ENCODE measurements at regions of chr19 and their contacts with region 1.

Region 1: GRCh38 chr19:53333463-53334449 is at the start of gene ZNF845:
- DNase-seq: peak; percentile 98
- total RNA-seq, gene ZNF845: 3.2 TPM

Region 2: GRCh38 chr19:53224606-53225005 is 109.2 kb before region 1 on chr19:
- intact Hi-C with region 1: no loop called
- DNase-seq: no peak

Region 3: DNA sequence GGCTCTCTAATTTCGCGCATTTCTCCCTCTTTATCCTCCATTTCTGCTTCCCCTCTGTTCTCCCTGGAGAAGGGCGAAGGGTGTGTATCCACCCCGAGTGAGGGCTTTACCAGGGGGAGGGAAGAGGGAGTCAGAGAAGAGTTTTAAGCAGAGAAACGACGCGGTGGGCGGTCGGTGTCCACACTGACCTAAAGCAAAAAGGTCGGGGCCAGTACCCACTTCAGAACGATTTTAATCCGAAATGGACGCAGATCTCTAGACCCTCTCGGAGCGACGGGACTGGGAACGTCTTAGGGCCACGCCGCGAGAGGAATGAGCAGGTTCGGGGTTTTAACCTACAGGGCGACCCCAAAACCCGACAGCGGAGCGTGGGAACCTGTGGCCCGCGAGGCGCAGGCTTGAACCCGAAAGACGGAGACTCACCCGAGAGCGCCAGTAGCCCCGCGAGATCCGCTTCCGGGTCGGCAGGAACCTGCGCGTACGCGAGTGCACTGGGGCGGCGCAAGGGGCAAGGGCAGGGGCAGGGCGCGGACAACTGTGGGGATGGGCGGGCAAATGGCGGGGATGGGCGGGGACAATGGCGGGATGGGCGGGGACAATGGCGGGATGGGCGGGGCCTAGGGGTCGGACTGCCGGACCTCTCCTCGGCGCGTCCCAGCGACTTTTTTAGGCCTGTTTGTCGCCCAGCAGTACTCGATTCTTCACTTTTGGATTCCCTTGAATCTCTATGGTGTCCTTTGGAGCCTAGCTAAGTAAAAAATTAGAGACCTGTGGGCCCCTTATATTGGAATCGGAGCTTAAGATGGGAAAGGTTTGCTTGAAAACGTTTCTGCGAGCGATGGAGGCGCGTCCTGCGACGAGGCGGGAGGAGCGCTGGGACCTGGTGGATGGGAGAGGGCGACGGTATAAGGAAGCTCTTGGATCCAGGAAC is 79.1 kb before region 1 on chr19 and contains the start of gene ZNF677:
- intact Hi-C with region 1: loop called (anchors 5 kb)
- DNase-seq: peak; percentile 95
- total RNA-seq, gene ZNF677: 20.2 TPM

Region 4: DNA sequence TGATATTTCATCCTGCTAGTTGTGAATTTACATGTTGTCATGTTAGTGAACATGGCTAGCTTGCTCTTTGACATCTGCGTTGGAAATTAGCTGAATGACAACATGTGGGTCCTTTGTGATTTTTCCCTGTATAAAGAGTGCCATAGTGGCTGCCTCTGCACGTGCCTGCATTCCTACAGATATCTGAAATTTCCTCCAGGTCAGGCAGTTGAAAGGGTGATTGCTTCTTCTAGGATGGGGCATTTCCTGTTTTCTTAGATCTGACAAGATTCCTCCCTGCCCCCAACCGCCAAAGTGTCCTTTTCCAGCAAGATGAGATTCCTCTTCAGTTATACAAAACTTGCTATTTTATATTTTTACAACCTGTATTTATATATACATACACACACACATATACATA is 40.5 kb after region 1 on chr19:
- intact Hi-C with region 1: no loop called
- DNase-seq: no peak